PC-9 (cell line): ENCODE measurements at regions of chr7 and their contacts with region 1.

Region 1: DNA sequence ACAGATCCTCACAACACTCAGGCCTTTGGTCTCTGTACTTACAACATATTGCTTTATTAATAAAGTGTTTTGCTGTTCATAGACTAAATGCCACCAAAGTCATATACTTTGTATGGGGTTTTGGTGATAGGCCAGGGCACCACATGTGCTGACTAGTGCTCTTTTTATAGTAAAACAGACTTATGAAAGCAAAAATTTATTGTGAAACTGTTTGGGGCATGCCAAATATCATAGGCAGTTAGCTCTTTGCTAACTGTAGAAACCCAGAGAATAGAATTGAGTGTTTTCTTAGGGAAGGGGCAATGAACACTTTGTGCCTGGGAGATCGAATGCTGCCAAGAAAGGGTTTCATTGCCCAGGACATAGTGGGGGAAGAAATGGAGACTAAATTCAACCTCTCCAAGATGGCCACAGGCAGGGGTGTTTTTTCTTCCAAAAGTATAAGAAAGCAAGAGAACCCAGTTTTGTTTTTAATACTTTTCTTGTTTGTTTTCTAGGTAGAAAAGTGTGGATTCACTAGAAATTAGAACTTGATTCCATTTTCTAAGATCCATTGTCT is 142.7 kb downstream of the TRIL start:
- DNase-seq: no peak
- H3K4me3 ChIP-seq: no peak overlapping the region
- H3K27ac ChIP-seq: no peak overlapping the region
- H3K4me1 ChIP-seq: no peaks in the 10 kb centered on the region
- H3K27me3 ChIP-seq: no peaks in the 10 kb centered on the region
- CTCF ChIP-seq: no peak

Region 2: DNA sequence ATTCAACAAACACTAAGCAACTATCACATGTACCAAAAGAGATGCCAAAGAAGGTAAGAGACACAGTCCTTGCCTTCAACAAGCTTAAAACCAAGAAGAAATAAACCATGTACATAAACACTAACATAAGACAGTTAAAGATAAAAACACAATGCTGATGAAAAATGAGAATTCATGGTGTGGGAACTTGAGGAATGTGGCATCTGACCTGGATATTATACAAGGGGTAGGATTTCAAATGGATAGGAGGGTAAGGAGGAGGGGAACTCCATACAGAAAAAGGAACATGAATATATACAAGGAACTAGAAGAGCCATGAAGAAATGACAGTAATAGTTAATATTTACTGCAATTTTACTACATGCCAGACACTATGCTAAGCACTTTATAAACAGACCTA is 1163.7 kb before region 1 on chr7:
- CTCF ChIA-PET with region 1: no interaction called
- POLR2A ChIA-PET with region 1: no interaction called
- intact Hi-C with region 1: loop called (anchors 10 kb)
- DNase-seq: no peak
- H3K4me3 ChIP-seq: peak overlapping the region; percentile 3; the same call in 1 of the 2 replicates
- H3K27ac ChIP-seq: peak overlapping the region; percentile 2
- H3K4me1 ChIP-seq: peaks cover 25% of the 10 kb centered on the region
- H3K27me3 ChIP-seq: no peaks in the 10 kb centered on the region
- CTCF ChIP-seq: no peak

Region 3: DNA sequence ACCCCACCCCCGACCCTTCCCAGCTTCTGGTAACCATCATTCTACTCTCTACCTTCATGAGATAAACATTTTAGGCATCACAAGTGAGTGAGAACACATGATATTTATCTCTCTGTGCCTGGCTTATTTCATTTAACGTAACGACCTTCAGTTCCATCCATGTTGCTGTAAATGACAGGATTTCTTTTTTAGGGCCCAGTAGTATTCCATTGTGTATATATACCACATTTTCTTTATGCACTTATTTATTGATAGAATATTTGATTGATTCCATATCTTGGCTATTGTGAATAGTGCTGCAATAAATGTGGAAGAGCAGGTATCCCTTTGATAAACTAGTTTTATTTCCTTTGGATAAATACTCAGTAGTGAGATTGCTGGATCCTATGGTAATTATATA is 290.5 kb before region 1 on chr7:
- CTCF ChIA-PET with region 1: interaction called, 12 read pairs
- POLR2A ChIA-PET with region 1: no interaction called
- intact Hi-C with region 1: no loop called
- DNase-seq: no peak
- H3K4me3 ChIP-seq: no peak overlapping the region
- H3K27ac ChIP-seq: no peak overlapping the region
- H3K4me1 ChIP-seq: no peaks in the 10 kb centered on the region
- H3K27me3 ChIP-seq: peaks cover 5% of the 10 kb centered on the region; the same call in 1 of the 2 replicates
- CTCF ChIP-seq: no peak

Region 4: DNA sequence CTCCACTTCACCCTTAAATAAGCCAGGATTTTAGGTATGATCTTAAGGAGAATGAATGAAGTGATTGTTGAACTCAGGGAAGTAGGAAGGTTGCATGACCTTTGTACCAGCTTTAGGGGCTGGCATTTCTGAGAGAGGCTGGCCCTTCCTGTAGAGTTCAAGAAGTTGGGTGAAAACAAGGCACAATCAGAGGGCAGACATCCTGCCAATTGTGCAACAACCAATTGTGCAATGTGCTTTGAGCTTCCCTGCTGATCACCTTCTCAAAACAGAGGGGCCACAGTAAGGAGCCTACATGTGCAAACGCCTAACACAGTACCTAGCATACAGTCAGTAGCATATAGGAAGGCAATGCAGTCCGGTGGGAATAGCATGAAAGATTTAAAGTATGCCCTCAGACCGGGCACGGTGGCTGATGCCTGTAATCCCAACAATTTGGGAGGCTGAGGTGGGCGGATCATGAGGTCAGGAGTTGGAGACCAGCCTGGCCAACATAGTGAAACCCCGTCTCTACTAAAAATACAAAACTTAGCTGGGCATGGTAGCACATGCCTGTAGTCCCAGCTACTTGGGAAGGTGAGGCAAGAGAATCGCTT is 325.5 kb after region 1 on chr7:
- CTCF ChIA-PET with region 1: no interaction called
- POLR2A ChIA-PET with region 1: no interaction called
- intact Hi-C with region 1: no loop called
- DNase-seq: no peak
- H3K4me3 ChIP-seq: no peak overlapping the region
- H3K27ac ChIP-seq: no peak overlapping the region
- H3K4me1 ChIP-seq: peaks cover 27% of the 10 kb centered on the region
- H3K27me3 ChIP-seq: no peaks in the 10 kb centered on the region; the same call in 1 of the 2 replicates
- CTCF ChIP-seq: no peak